ENCODE measurements at regions of chr12 and their contacts with region 1.

Region 1: DNA sequence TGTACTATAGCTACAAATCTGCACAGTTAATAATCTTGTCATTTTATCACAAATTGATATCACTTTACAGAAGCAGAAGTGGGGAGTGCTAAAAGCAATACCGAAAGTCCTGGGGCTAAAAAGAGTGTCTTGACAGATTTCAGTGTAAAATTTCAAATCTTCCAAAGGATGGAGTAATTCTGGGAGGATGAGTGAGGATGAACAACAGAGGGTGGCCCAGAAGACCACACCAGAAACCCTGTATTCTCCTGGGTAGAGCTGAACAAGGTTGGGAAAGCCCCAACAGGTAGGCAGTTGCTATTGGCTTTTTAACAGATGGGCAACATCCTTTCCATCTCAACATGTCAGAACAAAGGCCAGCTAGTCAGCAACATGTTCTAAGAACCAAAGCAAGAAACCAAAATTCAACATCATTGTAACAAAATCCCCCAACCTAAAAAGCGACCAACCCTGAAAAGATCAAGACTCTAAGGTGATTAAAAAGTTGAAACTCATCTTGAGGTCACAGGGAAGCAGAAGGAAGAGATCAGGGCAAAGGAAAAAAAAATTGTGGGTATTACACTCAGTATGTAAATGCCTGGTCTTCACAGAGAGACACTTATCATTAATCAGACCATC is 38.8 kb downstream of the CBX5 start:
- DNase-seq: no peak
- ATAC-seq: no peak
- H3K4me3 ChIP-seq: no peak overlapping the region
- H3K4me3 Mint-ChIP-seq: no peak overlapping the region
- H3K27ac ChIP-seq: no peak overlapping the region
- H3K27ac Mint-ChIP-seq: no peak overlapping the region
- H3K4me1 ChIP-seq: no peaks in the 10 kb centered on the region
- H3K4me1 Mint-ChIP-seq: peaks cover 2% of the 10 kb centered on the region
- H3K27me3 ChIP-seq: no peaks in the 10 kb centered on the region
- H3K27me3 Mint-ChIP-seq: no peaks in the 10 kb centered on the region
- CTCF ChIP-seq: no peak

Region 2: DNA sequence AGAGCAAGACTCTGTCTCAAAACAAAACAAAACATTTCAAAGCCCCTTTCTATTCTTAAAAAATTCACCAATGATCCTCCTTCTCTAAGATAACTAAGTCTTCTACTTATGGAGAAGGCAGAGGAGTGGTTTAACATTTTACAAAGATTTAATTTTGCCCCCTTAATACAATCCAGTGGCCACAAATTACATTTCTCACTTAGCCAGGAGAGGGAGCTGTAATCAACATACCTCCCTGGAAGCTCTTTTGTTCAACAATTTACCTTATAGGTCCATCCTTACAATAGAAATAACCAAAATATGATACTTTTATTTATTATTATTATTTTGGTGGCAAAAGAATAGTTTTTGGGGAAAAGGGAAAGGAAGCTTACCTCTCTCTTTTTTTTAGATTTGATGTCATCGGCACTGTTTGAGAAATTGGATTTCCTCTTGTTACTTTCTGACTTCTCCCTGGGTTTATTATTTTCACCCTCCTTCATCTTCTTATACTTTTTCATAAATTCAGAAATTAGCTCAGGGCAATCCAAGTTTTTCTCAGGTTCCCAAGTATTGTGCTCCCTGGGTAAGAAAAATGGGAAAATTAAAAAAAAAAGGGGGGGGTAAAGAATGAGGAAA is 10.7 kb after region 1 on chr12:
- CTCF ChIA-PET with region 1: interaction called, 25 read pairs
- POLR2A ChIA-PET with region 1: interaction called, 9 read pairs
- intact Hi-C with region 1: no loop called
- DNase-seq: peak; percentile 63
- ATAC-seq: peak; percentile 56
- H3K4me3 ChIP-seq: no peak overlapping the region
- H3K4me3 Mint-ChIP-seq: no peak overlapping the region
- H3K27ac ChIP-seq: no peak overlapping the region
- H3K27ac Mint-ChIP-seq: no peak overlapping the region
- H3K4me1 ChIP-seq: peaks cover 0 to 4% of the 10 kb centered on the region in 2 donors
- H3K4me1 Mint-ChIP-seq: peaks cover 6% of the 10 kb centered on the region
- H3K27me3 ChIP-seq: no peaks in the 10 kb centered on the region
- H3K27me3 Mint-ChIP-seq: no peaks in the 10 kb centered on the region
- CTCF ChIP-seq: peak; percentile 77

Measured in B cell (primary cell).